HepG2 (cell line): ENCODE measurements at regions of chr15 and their contacts with region 1.

Region 1: DNA sequence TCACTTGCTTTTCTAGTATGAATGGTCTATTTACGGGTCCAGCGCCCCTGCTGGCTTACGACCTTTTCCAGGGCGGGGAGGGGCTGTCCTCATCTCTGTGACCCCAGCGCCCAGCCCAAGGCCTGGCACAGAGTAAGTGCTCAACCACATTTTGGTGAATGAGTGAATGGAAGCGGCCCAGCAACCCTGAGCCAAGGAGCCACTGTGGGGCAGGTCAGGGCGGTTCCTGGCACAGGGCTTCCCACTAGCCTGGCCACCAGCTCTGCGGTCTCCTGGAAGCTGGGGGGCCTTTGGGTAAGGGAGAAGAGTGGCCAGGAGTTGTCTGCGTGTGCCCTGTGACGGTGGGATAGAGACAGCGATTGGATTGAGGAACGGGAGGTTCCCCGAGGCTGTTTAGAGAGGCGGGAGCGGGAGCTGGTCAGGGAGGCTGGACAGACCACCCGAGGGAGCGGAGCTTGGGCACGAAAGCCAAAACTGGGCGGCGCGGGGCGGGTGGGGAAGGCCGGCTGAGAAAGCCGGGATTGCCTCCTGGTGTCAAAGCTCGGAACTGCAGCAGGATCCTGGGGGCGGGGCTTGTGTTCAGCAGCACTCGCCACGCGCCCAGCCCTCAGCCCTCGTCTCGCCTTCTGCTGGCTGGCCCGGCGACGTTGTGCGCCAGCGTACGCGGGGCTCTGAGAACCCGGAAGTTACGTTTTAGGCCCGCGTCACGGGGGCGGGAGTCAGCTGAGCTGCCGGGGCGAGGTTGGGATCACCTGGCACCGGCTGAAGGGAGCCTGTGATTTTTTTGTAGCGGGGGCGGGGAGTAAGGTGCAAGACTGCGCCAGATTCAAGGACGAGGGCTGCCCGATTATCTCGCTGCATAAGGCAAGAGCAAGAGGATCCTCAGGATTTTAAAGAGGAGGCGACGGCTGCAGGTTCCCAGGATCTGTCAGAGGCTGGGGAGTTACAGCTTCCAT is at the start of gene VPS18:
- DNase-seq: peak; percentile 90
- ATAC-seq: peak; percentile 90
- H3K4me3 ChIP-seq: peak within 1 kb of the TSS; percentile 87 to 98 (median 89)
- H3K27ac ChIP-seq: peak within 1 kb of the TSS; percentile 82
- H3K4me1 ChIP-seq: peaks cover 36% of the 10 kb centered on the region
- H3K27me3 ChIP-seq: no peaks in the 10 kb centered on the region
- CTCF ChIP-seq: peak; percentile 95
- EP300 ChIP-seq: no peak
- POLR2A ChIP-seq: peak; percentile 52 to 60; a peak in 2 of 4 replicates
- RAD21 ChIP-seq: peak; percentile 86
- total RNA-seq, gene VPS18: 15.8 and 17.0 TPM in 2 replicates

Region 2: GRCh38 chr15:40582726-40583246 is 311.2 kb before region 1 on chr15:
- CTCF ChIA-PET with region 1: no interaction called
- POLR2A ChIA-PET with region 1: no interaction called
- in situ Hi-C with region 1: loop called (anchors 10 kb)
- intact Hi-C with region 1: no loop called
- DNase-seq: peak; percentile 99
- ATAC-seq: peak; percentile 94
- H3K4me3 ChIP-seq: peak overlapping the region; percentile 70 to 72 (median 72)
- H3K27ac ChIP-seq: peak overlapping the region; percentile 91
- H3K4me1 ChIP-seq: peaks cover 15% of the 10 kb centered on the region
- H3K27me3 ChIP-seq: no peaks in the 10 kb centered on the region
- CTCF ChIP-seq: no peak
- EP300 ChIP-seq: peak in 1 of 2 experiments; percentile 50; a peak in 1 of 4 replicates
- POLR2A ChIP-seq: peak; percentile 28 to 40; a peak in 2 of 4 replicates
- RAD21 ChIP-seq: no peak

Region 3: GRCh38 chr15:40694688-40695468 is 199.1 kb before region 1 on chr15 and contains the start of gene RAD51:
- CTCF ChIA-PET with region 1: no interaction called
- POLR2A ChIA-PET with region 1: interaction called, 6 read pairs
- in situ Hi-C with region 1: loop called (anchors 10 kb)
- intact Hi-C with region 1: loop called (anchors 5 kb)
- DNase-seq: peak; percentile 89
- ATAC-seq: peak; percentile 91
- H3K4me3 ChIP-seq: peak within 1 kb of the TSS; percentile 80 to 100 (median 92)
- H3K27ac ChIP-seq: peak within 1 kb of the TSS; percentile 97
- H3K4me1 ChIP-seq: peaks cover 20% of the 10 kb centered on the region
- H3K27me3 ChIP-seq: peaks cover 0 to 5% of the 10 kb centered on the region in 2 experiments; a peak in 1 of 5 replicates
- CTCF ChIP-seq: peak; percentile 6; the same call in 1 of the 2 replicates
- EP300 ChIP-seq: no peak
- POLR2A ChIP-seq: peak; percentile 68 to 76; a peak in 3 of 4 replicates
- RAD21 ChIP-seq: no peak
- total RNA-seq, gene RAD51: 12.8 and 20.6 TPM in 2 replicates

Region 4: GRCh38 chr15:40702077-40702476 is 191.9 kb before region 1 on chr15:
- CTCF ChIA-PET with region 1: no interaction called
- POLR2A ChIA-PET with region 1: no interaction called
- in situ Hi-C with region 1: loop called (anchors 10 kb)
- intact Hi-C with region 1: loop called (anchors 5 kb)
- DNase-seq: peak; percentile 4
- ATAC-seq: no peak
- H3K4me3 ChIP-seq: no peak overlapping the region
- H3K27ac ChIP-seq: no peak overlapping the region
- H3K4me1 ChIP-seq: no peaks in the 10 kb centered on the region
- H3K27me3 ChIP-seq: no peaks in the 10 kb centered on the region
- CTCF ChIP-seq: no peak
- EP300 ChIP-seq: no peak
- POLR2A ChIP-seq: no peak
- RAD21 ChIP-seq: no peak

Region 5: GRCh38 chr15:40743921-40744814 is 149.8 kb before region 1 on chr15:
- CTCF ChIA-PET with region 1: no interaction called
- POLR2A ChIA-PET with region 1: interaction called, 3 read pairs
- in situ Hi-C with region 1: no loop called
- intact Hi-C with region 1: loop called (anchors 5 kb)
- DNase-seq: no peak
- ATAC-seq: peak; percentile 44; the same call in 2 of the 3 replicates
- H3K4me3 ChIP-seq: no peak overlapping the region
- H3K27ac ChIP-seq: no peak overlapping the region
- H3K4me1 ChIP-seq: peaks cover 7% of the 10 kb centered on the region; the same call in 1 of the 2 replicates
- H3K27me3 ChIP-seq: no peaks in the 10 kb centered on the region
- CTCF ChIP-seq: no peak
- EP300 ChIP-seq: no peak
- POLR2A ChIP-seq: no peak
- RAD21 ChIP-seq: no peak

Region 6: GRCh38 chr15:40754883-40755811 is 138.9 kb before region 1 on chr15 and contains the start of gene RMDN3:
- CTCF ChIA-PET with region 1: no interaction called
- POLR2A ChIA-PET with region 1: no interaction called
- in situ Hi-C with region 1: no loop called
- intact Hi-C with region 1: no loop called
- DNase-seq: peak; percentile 77
- ATAC-seq: peak; percentile 87
- H3K4me3 ChIP-seq: peak within 1 kb of the TSS; percentile 83 to 98 (median 89)
- H3K27ac ChIP-seq: peak within 1 kb of the TSS; percentile 84
- H3K4me1 ChIP-seq: peaks cover 54% of the 10 kb centered on the region
- H3K27me3 ChIP-seq: no peaks in the 10 kb centered on the region
- CTCF ChIP-seq: peak; percentile 35
- EP300 ChIP-seq: no peak; a peak in 1 of 4 replicates
- POLR2A ChIP-seq: peak; percentile 79 to 91
- RAD21 ChIP-seq: no peak
- total RNA-seq, gene RMDN3: 10.5 and 19.5 TPM in 2 replicates

Region 7: GRCh38 chr15:40807028-40807887 is 86.8 kb before region 1 on chr15 and contains the starts of genes DNAJC17 and ZFYVE19:
- CTCF ChIA-PET with region 1: no interaction called
- POLR2A ChIA-PET with region 1: interaction called, 10 read pairs
- in situ Hi-C with region 1: no loop called
- intact Hi-C with region 1: no loop called
- DNase-seq: peak; percentile 96
- ATAC-seq: peak; percentile 98
- H3K4me3 ChIP-seq: peak within 1 kb of the TSS; percentile 74 to 95 (median 79)
- H3K27ac ChIP-seq: peak within 1 kb of the TSS; percentile 76
- H3K4me1 ChIP-seq: peaks cover 39% of the 10 kb centered on the region
- H3K27me3 ChIP-seq: no peaks in the 10 kb centered on the region; a peak in 1 of 5 replicates
- CTCF ChIP-seq: 0 out of 2 replicates have a peak, but pooled peaks have one; percentile 13
- EP300 ChIP-seq: no peak; a peak in 1 of 4 replicates
- POLR2A ChIP-seq: peak; percentile 63 to 95
- RAD21 ChIP-seq: no peak
- total RNA-seq, gene DNAJC17: 26.5 and 30.2 TPM in 2 replicates
- total RNA-seq, gene ZFYVE19: 19.2 and 23.3 TPM in 2 replicates

Region 8: DNA sequence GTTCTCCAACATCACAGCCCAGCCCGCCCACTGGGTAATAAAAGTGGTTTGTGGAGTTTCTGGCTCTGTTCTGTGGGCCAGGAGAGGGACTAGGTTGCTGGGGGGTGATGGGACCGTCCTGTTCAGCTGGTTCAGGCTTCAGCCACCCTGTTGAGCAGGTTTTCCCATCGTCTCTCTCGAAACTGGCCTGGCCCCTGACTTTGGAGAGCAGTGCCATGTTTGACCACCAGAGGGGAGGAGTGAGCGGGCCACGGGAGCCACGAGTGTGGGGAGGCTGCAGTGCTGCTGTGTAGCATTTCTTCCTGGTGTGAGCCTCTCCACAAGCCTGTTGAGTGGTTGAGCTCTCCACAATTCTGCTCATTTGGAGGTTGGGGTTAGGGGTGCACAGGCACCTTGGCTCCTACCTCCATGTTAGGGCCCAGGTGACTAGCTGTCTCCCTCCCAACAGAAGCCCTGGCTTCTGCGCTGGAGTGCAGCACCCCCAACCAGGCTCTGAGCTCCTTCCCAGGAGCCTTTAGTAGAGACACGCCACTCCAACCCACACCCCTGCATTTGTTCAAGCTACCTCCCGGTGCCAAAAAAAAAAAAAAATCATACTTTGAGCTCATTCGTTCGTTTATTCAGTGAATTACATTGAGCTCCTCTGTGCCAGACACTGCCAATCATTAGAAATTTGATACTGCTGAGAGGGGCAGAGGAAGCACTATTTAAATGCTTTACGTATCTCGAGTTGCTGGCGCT is 36.2 kb before region 1 on chr15:
- CTCF ChIA-PET with region 1: interaction called, 80 read pairs
- POLR2A ChIA-PET with region 1: interaction called, 40 read pairs
- in situ Hi-C with region 1: loop called (anchors 5 kb)
- intact Hi-C with region 1: loop called (anchors 1 kb)
- DNase-seq: peak; percentile 57
- ATAC-seq: peak; percentile 80
- H3K4me3 ChIP-seq: peak overlapping the region in 2 of 3 experiments; percentile 33 to 49; a peak in 4 of 6 replicates
- H3K27ac ChIP-seq: no peak overlapping the region
- H3K4me1 ChIP-seq: peaks cover 62% of the 10 kb centered on the region
- H3K27me3 ChIP-seq: no peaks in the 10 kb centered on the region
- CTCF ChIP-seq: peak; percentile 97
- EP300 ChIP-seq: no peak
- POLR2A ChIP-seq: no peak
- RAD21 ChIP-seq: peak; percentile 75

Region 9: GRCh38 chr15:40952901-40953712 is 59.1 kb after region 1 on chr15 and contains the start of gene CHAC1:
- CTCF ChIA-PET with region 1: no interaction called
- POLR2A ChIA-PET with region 1: no interaction called
- in situ Hi-C with region 1: no loop called
- intact Hi-C with region 1: no loop called
- DNase-seq: no peak
- ATAC-seq: peak; percentile 16; the same call in 2 of the 3 replicates
- H3K4me3 ChIP-seq: peak within 1 kb of the TSS in 2 of 3 experiments; percentile 2 to 43; a peak in 2 of 6 replicates
- H3K27ac ChIP-seq: no peak within 1 kb of the TSS
- H3K4me1 ChIP-seq: peaks cover 20% of the 10 kb centered on the region
- H3K27me3 ChIP-seq: peaks cover 14 to 46% of the 10 kb centered on the region in 2 experiments; a peak in 4 of 5 replicates
- CTCF ChIP-seq: no peak
- EP300 ChIP-seq: no peak
- POLR2A ChIP-seq: no peak
- RAD21 ChIP-seq: no peak
- total RNA-seq, gene CHAC1: not detected in 2 replicates

Region 10: DNA sequence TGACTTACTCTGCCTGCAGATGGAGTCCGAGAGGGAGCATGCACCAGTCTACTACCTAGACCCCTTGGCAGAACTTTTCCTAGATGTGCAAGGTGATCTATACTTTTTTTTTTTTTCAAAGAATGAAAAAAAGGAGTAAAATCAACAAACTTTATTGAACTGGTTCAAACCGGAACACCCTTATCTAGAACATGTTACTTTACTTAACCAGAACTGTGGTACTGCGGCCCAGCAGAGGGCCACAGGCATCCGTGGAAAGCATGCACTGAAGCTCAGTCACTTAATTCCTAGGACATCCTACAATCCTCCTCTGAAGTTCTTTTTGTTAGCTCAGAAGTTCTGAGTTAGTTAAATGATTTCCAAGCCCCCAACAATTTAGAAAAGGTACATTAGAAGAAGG is 80.9 kb after region 1 on chr15:
- CTCF ChIA-PET with region 1: no interaction called
- POLR2A ChIA-PET with region 1: no interaction called
- in situ Hi-C with region 1: no loop called
- intact Hi-C with region 1: no loop called
- DNase-seq: no peak
- ATAC-seq: no peak
- H3K4me3 ChIP-seq: no peak overlapping the region
- H3K27ac ChIP-seq: no peak overlapping the region
- H3K4me1 ChIP-seq: no peaks in the 10 kb centered on the region
- H3K27me3 ChIP-seq: no peaks in the 10 kb centered on the region
- CTCF ChIP-seq: no peak
- EP300 ChIP-seq: no peak
- POLR2A ChIP-seq: no peak
- RAD21 ChIP-seq: no peak